H1 (cell line): ENCODE measurements at regions of chr14 and their contacts with region 1.

Region 1: GRCh38 chr14:69726761-69727511 is 40.0 kb upstream of the SRSF5 start:
- DNase-seq: peak in 1 of 2 experiments; percentile 93
- H3K4me3 ChIP-seq: peak overlapping the region in 3 of 4 experiments; percentile 16 to 52 (median 34); a peak in 5 of 8 replicates
- H3K27ac ChIP-seq: no peak overlapping the region
- H3K4me1 ChIP-seq: no peaks in the 10 kb centered on the region; a peak in 3 of 7 replicates
- H3K27me3 ChIP-seq: peaks cover 0 to 11% (median 9%) of the 10 kb centered on the region in 4 experiments; a peak in 5 of 7 replicates
- CTCF ChIP-seq: peak; percentile 91 to 97 (median 92)
- EP300 ChIP-seq: 0 out of 3 replicates have a peak, but pooled peaks of 1 of the 2 experiments have one; percentile 35
- POLR2A ChIP-seq: no peak
- RAD21 ChIP-seq: peak; percentile 94 to 99

Region 2: DNA sequence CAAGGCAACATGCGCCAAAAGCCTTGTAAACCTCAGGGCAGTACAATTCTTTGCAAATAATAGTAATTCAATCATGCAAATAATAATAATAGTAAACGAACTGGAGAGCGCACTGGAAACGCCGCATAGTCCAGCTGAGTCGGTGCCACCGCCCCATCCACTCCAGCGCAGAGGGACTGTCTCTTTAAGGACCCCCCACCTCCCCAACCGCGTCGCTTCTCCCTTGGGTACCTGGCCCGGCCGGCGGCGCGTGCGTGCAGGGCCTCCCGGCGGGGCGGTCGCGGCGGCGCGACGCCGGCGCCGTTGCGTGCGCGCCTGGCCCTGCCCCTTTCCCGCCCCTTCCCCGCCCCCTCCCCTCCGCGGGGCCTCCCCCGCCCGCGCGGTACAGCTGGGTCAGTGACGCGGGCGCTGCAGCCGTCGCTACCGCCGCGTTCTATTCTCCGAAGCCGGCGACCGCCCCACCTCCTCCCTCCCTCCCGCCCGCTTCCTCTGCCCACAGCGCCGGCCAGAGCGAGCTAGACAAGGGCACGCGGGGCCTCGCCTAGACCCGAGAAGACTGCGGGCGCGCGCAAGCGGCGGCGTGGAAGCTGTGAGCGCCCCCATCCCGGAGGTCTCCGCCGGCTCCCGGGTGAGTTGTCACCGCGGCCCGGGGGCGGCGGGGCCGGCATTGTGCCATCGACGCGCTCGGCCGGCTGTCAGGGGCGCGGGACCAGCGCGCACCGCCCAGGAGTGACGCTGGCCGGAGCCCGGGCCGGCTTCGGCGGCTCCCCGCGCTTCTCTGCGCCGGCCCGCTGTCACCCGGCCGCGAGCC is 115.5 kb before region 1 on chr14 and contains the start of gene SUSD6:
- CTCF ChIA-PET with region 1: interaction called, 34 read pairs
- POLR2A ChIA-PET with region 1: interaction called, 3 read pairs
- DNase-seq: peak; percentile 29 to 77
- H3K4me3 ChIP-seq: peak within 1 kb of the TSS; percentile 59 to 80 (median 62)
- H3K27ac ChIP-seq: no peak within 1 kb of the TSS
- H3K4me1 ChIP-seq: peaks cover 2 to 15% (median 5%) of the 10 kb centered on the region in 4 experiments; a peak in 5 of 7 replicates
- H3K27me3 ChIP-seq: peaks cover 0 to 3% (median 0%) of the 10 kb centered on the region in 4 experiments; a peak in 1 of 7 replicates
- CTCF ChIP-seq: no peak; a peak in 1 of 4 replicates
- EP300 ChIP-seq: no peak
- POLR2A ChIP-seq: no peak
- RAD21 ChIP-seq: no peak; a peak in 1 of 4 replicates
- total RNA-seq, gene SUSD6: 3.8 and 5.1 TPM in 2 replicates

Region 3: GRCh38 chr14:69696633-69697557 is 30.0 kb before region 1 on chr14:
- CTCF ChIA-PET with region 1: interaction called, 10 read pairs
- POLR2A ChIA-PET with region 1: no interaction called
- DNase-seq: no peak
- H3K4me3 ChIP-seq: no peak overlapping the region
- H3K27ac ChIP-seq: no peak overlapping the region
- H3K4me1 ChIP-seq: peaks cover 5 to 25% (median 12%) of the 10 kb centered on the region in 4 experiments; a peak in 4 of 7 replicates
- H3K27me3 ChIP-seq: no peaks in the 10 kb centered on the region
- CTCF ChIP-seq: no peak
- EP300 ChIP-seq: no peak
- POLR2A ChIP-seq: no peak
- RAD21 ChIP-seq: no peak

Region 4: GRCh38 chr14:69715725-69716477 is 11.0 kb before region 1 on chr14:
- CTCF ChIA-PET with region 1: interaction called, 11 read pairs
- POLR2A ChIA-PET with region 1: interaction called, 4 read pairs
- DNase-seq: no peak
- H3K4me3 ChIP-seq: no peak overlapping the region
- H3K27ac ChIP-seq: no peak overlapping the region
- H3K4me1 ChIP-seq: peaks cover 16 to 39% (median 31%) of the 10 kb centered on the region in 4 experiments
- H3K27me3 ChIP-seq: no peaks in the 10 kb centered on the region
- CTCF ChIP-seq: no peak
- EP300 ChIP-seq: no peak
- POLR2A ChIP-seq: no peak
- RAD21 ChIP-seq: no peak